ENCODE measurements at regions of chr19 and their contacts with region 1.

Region 1: DNA sequence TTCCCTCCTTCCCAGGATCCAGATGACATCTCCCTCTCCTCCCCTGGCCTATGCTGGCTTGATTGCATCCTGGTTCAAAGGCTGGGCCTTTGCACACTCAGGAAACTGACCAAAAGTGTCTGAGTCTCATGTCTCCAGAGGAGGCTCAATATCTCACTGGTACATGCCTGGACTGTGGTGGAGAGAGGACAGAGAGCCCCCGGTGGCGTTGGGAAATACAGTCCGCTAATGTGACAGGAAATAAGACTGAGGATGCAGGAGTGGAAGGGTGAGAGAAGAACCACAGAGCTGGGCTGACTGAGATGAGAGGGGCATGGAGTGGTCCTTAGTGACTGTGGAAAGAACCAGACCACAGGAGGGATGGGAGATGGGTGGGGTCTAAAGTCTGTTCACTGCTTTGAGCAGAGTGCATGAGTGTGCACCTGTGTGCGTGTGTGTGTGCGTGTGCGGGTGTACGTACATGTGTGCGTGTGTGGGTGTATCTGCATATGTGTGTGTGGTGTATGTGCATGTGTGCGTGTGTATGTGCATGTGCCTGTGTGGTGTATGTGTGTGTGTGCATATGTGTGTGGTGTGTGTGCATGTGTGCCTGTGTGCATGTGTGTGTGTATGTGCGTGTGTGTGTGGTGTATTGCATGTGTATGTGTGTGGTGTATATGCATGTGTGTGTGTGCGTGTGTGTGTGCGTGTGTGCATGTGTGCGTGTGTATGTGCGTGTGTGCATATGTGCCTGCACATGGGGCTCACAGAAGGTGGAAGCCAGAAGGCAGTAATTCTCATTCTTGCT is 1.9 kb downstream of the SIGLEC5 start:
- DNase-seq: no peak
- H3K4me3 Mint-ChIP-seq: no peak overlapping the region
- H3K27ac Mint-ChIP-seq: no peak overlapping the region
- H3K4me1 Mint-ChIP-seq: no peaks in the 10 kb centered on the region
- H3K27me3 Mint-ChIP-seq: peaks cover 11% of the 10 kb centered on the region

Region 2: DNA sequence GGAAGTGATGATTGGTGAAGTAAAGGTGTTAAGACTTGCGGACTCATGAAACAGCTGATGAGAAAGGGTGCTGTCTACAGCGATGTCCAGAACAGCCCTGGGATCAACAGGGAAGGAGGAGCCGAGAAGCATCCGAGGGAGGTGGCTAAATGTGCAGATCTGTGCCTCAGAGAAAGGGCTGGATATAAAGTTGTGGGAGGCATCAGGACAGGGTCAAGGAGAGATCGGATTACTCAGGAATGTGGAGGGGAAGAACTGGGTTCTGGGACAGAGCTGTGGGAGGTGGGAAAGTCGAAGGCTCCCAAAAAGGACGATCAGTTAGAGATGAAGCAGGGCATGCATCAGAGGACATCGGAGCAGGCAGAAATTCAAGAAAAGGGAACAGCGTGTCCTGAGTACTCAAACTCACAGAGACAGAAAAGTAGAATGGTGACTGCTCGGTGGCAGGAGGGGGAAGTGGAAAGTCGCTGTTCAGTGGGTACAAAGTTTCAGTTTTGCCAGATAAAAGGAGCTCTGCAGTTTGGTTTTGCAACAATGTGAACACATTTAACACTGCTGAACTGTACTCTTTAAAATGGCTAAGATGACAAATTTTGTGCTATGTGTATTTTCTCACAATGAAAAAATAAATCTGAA is 16.4 kb after region 1 on chr19:
- intact Hi-C with region 1: loop called (anchors 2 kb)
- DNase-seq: no peak
- H3K4me3 Mint-ChIP-seq: no peak overlapping the region
- H3K27ac Mint-ChIP-seq: no peak overlapping the region
- H3K4me1 Mint-ChIP-seq: peaks cover 3% of the 10 kb centered on the region
- H3K27me3 Mint-ChIP-seq: peaks cover 40% of the 10 kb centered on the region

Region 3: DNA sequence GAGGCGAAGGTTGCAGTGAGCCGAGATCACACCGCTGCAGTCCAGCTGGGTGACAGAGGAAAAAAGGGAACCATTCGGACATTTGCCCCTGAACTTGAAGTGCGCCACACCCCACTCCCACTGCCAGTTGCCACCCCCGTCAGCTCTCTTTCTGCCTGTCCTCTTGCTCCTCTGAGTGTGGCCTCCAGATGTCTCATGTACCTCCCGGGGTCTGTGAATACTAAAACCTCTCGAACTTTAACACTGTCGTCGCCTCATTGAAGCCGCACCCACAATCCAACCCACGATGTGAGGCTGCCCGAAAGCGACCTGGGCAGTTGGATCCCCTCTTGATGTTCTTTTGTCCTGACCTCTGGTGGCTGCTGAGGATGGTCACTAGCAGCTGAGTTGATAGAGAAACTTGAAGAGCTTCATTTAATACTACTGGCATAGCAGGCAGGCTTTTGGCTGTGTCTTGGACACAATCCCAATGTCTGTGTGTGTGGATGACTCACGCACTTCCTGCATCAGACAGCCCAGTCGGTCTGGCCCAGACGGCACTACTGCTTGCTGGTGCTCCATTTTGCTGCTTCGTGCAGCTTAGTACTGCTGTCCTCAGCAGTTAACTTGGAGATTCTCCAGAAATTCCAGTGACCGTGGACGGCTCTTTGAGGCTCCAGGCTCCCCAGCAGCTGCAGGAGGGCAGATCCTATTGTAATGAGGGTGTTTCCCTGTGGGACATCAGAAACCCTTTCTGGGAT is 170.9 kb after region 1 on chr19:
- intact Hi-C with region 1: no loop called
- DNase-seq: no peak
- H3K4me3 Mint-ChIP-seq: no peak overlapping the region
- H3K27ac Mint-ChIP-seq: no peak overlapping the region
- H3K4me1 Mint-ChIP-seq: no peaks in the 10 kb centered on the region
- H3K27me3 Mint-ChIP-seq: no peaks in the 10 kb centered on the region

Measured in activated T-helper 2 cell treated with anti-CD3 and anti-CD28 coated beads, Interferon-gamma antibody, Interleukin-2, Interleukin-4, amounts not matched to agents 10 μg/mL and 5 μg/mL and 100 μg/mL, durations not matched to agents 14 hours and 24 hours and 36 hours (primary cell).